Panc1 (cell line): ENCODE measurements at regions of chr17 and their contacts with region 1.

Region 1: DNA sequence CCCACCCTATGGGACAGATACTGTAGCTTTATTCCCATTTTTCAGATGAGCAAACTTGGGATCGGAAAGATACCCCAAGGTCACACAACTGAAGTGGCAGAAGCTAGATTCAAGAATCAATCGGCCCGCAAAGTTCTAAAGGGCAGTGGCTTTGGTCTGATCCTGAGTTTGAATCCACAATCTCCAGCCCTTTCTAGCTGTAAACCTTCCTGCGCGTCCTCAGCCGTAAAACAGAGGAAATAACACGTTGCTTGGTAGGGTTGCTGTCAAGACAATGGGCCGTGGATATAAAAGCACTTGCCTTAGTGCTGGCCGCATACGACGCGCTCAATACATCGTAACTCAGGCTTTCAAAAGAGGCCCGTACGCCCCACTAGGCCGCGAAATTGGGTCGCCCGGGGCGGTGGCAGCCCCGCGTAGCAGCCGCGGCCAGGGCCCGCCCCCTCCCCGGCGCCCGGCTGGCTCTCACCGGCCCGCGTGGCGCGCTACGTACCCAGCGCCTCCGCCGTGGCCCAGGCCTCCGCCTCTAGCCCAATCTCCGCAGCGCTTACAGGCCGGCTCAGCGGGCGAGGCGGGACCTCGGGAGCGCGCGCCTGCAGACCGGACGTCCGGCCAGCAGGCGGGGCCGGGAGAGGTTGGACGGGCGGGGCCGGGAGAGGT is at the start of gene DCAKD:
- DNase-seq: no peak
- ATAC-seq: peak; percentile 99
- H3K4me3 ChIP-seq: peak within 1 kb of the TSS; percentile 73 to 90
- H3K27ac ChIP-seq: peak within 1 kb of the TSS; percentile 99
- H3K4me1 ChIP-seq: peaks cover 9% of the 10 kb centered on the region; the same call in 1 of the 2 replicates
- H3K27me3 ChIP-seq: no peaks in the 10 kb centered on the region
- CTCF ChIP-seq: no peak
- total RNA-seq, gene DCAKD: 24.3 TPM

Region 2: DNA sequence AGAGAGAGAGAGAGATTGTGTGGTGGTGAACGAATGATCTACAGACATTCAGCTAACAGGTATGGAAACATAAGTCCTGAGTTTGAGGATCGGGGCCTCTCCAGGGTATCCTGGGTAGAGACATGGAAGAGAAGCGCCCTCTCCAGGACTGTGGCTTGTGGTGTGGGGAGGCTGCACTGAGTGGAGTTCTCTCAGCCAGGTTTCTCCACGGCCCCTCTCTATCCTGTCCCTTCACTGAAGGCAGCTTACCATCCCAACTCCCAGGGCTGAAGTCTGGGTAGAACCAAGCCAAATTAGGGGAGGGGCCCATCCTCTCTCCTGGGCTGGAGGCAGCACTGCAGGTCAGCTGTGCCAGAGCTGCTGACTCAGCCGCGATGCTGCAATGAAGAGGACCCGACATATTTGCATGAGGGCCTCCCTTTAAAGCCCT is 89.3 kb before region 1 on chr17:
- CTCF ChIA-PET with region 1: no interaction called
- POLR2A ChIA-PET with region 1: interaction called, 15 read pairs
- in situ Hi-C with region 1: no loop called
- intact Hi-C with region 1: no loop called
- DNase-seq: no peak
- ATAC-seq: peak; percentile 69; the same call in 1 of the 2 replicates
- H3K4me3 ChIP-seq: no peak overlapping the region
- H3K27ac ChIP-seq: no peak overlapping the region
- H3K4me1 ChIP-seq: no peaks in the 10 kb centered on the region
- H3K27me3 ChIP-seq: no peaks in the 10 kb centered on the region
- CTCF ChIP-seq: no peak; the same call in 1 of the 2 replicates

Region 3: DNA sequence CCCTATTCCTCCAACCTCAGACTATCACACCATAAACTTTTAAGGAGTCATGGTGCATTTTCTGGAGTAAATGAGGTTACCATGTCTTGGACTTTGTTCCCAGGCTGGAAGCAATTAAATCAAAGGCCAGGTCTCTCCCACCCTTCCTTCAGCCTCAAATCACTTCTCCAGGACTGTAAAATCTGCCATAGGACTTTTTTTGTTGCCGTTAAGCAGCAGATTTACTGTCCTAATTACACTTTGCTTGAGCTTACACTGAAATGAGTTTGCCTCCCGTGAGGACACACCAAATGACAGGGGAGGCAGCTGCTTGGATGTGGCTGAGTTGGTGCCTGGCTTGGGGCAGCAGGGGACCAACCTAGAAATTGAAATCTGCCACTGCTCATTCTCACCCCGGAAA is 14.5 kb before region 1 on chr17:
- CTCF ChIA-PET with region 1: interaction called, 15 read pairs
- POLR2A ChIA-PET with region 1: interaction called, 6 read pairs
- in situ Hi-C with region 1: no loop called
- intact Hi-C with region 1: no loop called
- DNase-seq: no peak
- ATAC-seq: no peak
- H3K4me3 ChIP-seq: no peak overlapping the region
- H3K27ac ChIP-seq: no peak overlapping the region
- H3K4me1 ChIP-seq: no peaks in the 10 kb centered on the region
- H3K27me3 ChIP-seq: no peaks in the 10 kb centered on the region
- CTCF ChIP-seq: no peak